B cell (primary cell): ENCODE measurements at regions of chr7 and their contacts with region 1.

Region 1: GRCh38 chr7:140175221-140176121 is 1.3 kb downstream of the KDM7A start:
- DNase-seq: peak; percentile 97
- ATAC-seq: peak; percentile 59
- H3K4me3 ChIP-seq: peak overlapping the region; percentile 69 to 89 (median 79)
- H3K4me3 Mint-ChIP-seq: peak overlapping the region; percentile 88
- H3K27ac ChIP-seq: peak overlapping the region; percentile 75 to 93
- H3K27ac Mint-ChIP-seq: peak overlapping the region; percentile 95
- H3K4me1 ChIP-seq: peaks cover 26 to 39% of the 10 kb centered on the region in 2 donors
- H3K4me1 Mint-ChIP-seq: peaks cover 42% of the 10 kb centered on the region
- H3K27me3 ChIP-seq: no peaks in the 10 kb centered on the region
- H3K27me3 Mint-ChIP-seq: no peaks in the 10 kb centered on the region
- CTCF ChIP-seq: peak; percentile 76

Region 2: GRCh38 chr7:139340037-139340807 is 835.2 kb before region 1 on chr7:
- CTCF ChIA-PET with region 1: no interaction called
- POLR2A ChIA-PET with region 1: interaction called, 6 read pairs
- intact Hi-C with region 1: loop called (anchors 2 kb)
- DNase-seq: peak; percentile 100
- ATAC-seq: peak; percentile 77
- H3K4me3 ChIP-seq: peak overlapping the region; percentile 73 to 99 (median 94)
- H3K4me3 Mint-ChIP-seq: peak overlapping the region; percentile 96
- H3K27ac ChIP-seq: peak overlapping the region; percentile 97 to 98
- H3K27ac Mint-ChIP-seq: peak overlapping the region; percentile 100
- H3K4me1 ChIP-seq: peaks cover 10 to 23% of the 10 kb centered on the region in 2 donors
- H3K4me1 Mint-ChIP-seq: peaks cover 30% of the 10 kb centered on the region
- H3K27me3 ChIP-seq: no peaks in the 10 kb centered on the region
- H3K27me3 Mint-ChIP-seq: peaks cover 5% of the 10 kb centered on the region
- CTCF ChIP-seq: peak; percentile 67

Region 3: GRCh38 chr7:140062528-140063299 is 112.8 kb before region 1 on chr7 and contains the start of gene PARP12:
- CTCF ChIA-PET with region 1: interaction called, 6 read pairs
- POLR2A ChIA-PET with region 1: interaction called, 6 read pairs
- intact Hi-C with region 1: loop called (anchors 1 kb)
- DNase-seq: peak; percentile 96
- ATAC-seq: peak; percentile 86
- H3K4me3 ChIP-seq: peak within 1 kb of the TSS; percentile 67 to 89 (median 84)
- H3K4me3 Mint-ChIP-seq: peak within 1 kb of the TSS; percentile 98
- H3K27ac ChIP-seq: peak within 1 kb of the TSS; percentile 86 to 93
- H3K27ac Mint-ChIP-seq: peak within 1 kb of the TSS; percentile 99
- H3K4me1 ChIP-seq: peaks cover 32 to 38% of the 10 kb centered on the region in 2 donors
- H3K4me1 Mint-ChIP-seq: peaks cover 43% of the 10 kb centered on the region
- H3K27me3 ChIP-seq: no peaks in the 10 kb centered on the region
- H3K27me3 Mint-ChIP-seq: no peaks in the 10 kb centered on the region
- CTCF ChIP-seq: no peak
- total RNA-seq, gene PARP12: 160 and 177 TPM in 2 replicates

Region 4: DNA sequence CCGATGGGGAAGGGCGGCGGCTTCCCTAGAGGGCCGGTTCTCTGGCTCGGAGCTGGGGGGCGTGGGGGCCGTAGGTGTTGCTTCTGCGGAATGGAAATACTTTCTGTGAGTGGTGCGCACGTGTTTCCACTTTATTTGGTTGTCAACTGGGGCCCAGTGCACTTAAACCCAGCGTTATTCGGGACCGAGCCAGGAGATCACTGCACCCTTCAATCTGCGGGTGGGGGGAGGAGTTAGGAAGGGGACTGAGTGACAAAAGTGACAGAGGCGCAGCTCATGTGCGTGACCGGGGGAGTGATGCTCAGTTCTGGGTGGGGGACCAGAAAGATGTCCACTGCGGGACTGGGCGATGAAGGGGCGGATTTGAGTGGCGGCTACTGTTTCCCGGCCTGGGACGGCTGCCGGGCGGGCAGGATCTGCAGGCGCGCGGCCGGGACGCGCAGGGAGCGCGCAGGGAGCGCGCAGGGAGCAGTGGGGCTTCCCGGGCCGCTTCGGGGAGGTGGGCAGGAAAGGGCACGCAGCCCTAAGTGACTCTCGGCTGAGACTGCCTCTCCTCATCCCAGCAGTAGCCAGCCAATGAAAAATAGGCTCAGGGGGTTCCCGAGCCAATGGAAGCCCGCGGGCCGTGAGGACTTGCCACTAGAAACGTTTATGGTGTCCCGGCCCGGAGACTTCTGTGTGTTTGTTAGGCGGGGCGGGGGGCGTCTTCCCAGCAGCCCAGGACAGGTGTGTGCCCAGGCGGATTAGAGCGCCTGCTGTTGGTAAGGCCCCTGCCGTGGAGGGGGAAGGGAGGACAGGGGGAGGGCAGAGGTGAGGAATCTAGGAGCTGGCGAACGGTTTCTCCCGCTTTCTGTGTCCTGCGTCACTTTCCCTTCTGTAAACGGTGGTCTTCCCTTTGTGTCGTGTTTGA is 55.6 kb after region 1 on chr7:
- CTCF ChIA-PET with region 1: interaction called, 21 read pairs
- POLR2A ChIA-PET with region 1: interaction called, 116 read pairs
- intact Hi-C with region 1: loop called (anchors 1 kb)
- DNase-seq: peak; percentile 69
- ATAC-seq: peak; percentile 10
- H3K4me3 ChIP-seq: peak overlapping the region; percentile 57 to 80 (median 64)
- H3K4me3 Mint-ChIP-seq: peak overlapping the region; percentile 90
- H3K27ac ChIP-seq: peak overlapping the region; percentile 93 to 96
- H3K27ac Mint-ChIP-seq: peak overlapping the region; percentile 99
- H3K4me1 ChIP-seq: peaks cover 49 to 74% of the 10 kb centered on the region in 2 donors
- H3K4me1 Mint-ChIP-seq: peaks cover 58% of the 10 kb centered on the region
- H3K27me3 ChIP-seq: no peaks in the 10 kb centered on the region
- H3K27me3 Mint-ChIP-seq: no peaks in the 10 kb centered on the region
- CTCF ChIP-seq: no peak

Region 5: DNA sequence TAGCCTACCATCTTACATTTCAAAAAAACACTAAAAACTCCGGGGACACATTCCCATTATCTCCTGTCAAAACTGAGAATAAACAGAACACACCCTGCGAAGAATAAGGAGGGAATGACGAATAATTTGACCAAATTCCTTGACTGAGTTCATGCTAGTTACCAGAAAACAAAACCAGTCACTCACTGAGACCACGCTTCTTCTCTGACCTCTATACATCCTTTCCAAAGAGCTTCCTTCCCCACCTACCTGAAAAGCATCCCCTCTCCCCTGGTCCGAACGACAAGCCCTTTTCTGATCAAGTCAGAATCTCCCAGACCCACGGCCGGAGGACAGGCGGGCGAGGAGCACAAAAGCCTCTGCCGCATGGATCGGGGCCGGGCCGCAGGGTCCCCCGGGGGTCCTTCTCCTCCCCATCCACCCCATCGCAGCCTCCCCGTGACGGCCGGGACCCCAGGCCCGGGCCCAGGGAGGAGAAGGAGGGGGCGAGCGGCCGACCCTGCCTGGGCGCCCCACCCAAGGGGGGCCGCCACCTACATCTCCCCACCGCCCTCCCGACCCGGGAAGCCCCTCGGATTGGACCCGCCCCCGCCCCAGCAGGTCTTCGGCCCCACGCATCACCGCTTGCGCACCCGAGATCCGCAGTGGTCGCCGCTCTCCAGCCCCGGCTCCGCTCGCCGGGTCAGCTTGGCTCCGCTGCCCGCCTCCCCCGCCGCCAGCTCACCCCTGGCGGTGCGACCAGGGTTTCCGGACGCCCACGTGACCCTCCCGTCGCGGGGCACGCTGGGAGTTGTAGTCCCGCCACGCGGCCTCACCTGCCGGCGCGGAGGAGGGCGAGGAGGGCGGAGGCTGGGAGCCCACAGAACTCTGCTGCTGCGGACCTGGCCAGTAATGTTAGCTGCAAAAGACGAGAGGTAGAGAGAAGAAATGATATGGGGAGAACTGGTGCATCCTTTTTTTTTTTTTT is 222.6 kb after region 1 on chr7 and contains the start of gene SLC37A3:
- CTCF ChIA-PET with region 1: no interaction called
- POLR2A ChIA-PET with region 1: no interaction called
- intact Hi-C with region 1: loop called (anchors 1 kb)
- DNase-seq: peak; percentile 86
- ATAC-seq: peak; percentile 97
- H3K4me3 ChIP-seq: peak within 1 kb of the TSS; percentile 62 to 69 (median 67)
- H3K4me3 Mint-ChIP-seq: peak within 1 kb of the TSS; percentile 98
- H3K27ac ChIP-seq: peak within 1 kb of the TSS in 1 of 2 donors; percentile 75
- H3K27ac Mint-ChIP-seq: peak within 1 kb of the TSS; percentile 83
- H3K4me1 ChIP-seq: peaks cover 7 to 11% of the 10 kb centered on the region in 2 donors
- H3K4me1 Mint-ChIP-seq: peaks cover 13% of the 10 kb centered on the region
- H3K27me3 ChIP-seq: no peaks in the 10 kb centered on the region
- H3K27me3 Mint-ChIP-seq: peaks cover 3% of the 10 kb centered on the region
- CTCF ChIP-seq: no peak
- total RNA-seq, gene SLC37A3: 20.1 TPM in 2 replicates